HEK293T (cell line): ENCODE measurements at regions of chr1 and their contacts with region 1.

Region 1: DNA sequence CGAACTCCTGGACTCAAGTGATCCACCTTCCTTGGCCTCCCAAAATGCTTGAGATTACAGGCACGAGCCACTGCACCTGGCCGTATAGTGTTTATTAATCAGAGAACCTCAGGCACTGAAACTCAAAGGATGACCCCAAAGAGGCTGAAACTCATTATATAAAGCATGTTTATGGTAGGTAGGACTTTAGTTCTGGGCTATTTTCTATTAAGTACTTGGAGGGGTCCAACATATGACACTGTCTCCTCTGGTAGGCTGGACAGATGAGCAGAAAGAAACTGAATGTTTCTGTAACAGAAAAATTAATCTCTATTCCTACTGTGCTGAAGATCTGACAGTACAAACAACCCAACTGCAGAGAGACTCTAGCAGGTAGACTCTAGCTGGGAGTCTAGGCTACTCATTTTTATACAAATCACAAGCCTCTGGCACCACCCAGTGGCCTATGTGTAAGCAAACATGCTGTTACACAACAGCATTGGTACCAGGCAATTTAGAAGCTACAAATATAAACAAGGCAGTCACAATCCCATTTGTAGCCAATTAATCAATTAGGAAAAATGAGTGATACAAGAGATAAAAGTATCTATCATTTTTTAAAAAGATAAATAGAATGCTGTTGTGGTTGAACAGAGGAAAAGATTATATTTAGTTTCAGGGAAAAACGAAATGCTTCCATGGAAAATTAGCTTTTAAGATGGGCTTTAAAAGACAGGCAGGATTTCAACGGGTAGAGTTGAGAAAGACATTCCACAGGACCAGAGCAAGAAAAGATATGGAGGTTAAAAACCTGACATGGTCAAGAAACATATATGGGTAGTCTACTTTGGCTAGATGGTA is 10.4 kb downstream of the DCAF8 start:
- DNase-seq: peak; percentile 78

Region 2: GRCh38 chr1:160098852-160099561 is 152.9 kb before region 1 on chr1:
- CTCF ChIA-PET with region 1: interaction called, 25 read pairs
- POLR2A ChIA-PET with region 1: interaction called, 3 read pairs
- DNase-seq: peak; percentile 100

Region 3: DNA sequence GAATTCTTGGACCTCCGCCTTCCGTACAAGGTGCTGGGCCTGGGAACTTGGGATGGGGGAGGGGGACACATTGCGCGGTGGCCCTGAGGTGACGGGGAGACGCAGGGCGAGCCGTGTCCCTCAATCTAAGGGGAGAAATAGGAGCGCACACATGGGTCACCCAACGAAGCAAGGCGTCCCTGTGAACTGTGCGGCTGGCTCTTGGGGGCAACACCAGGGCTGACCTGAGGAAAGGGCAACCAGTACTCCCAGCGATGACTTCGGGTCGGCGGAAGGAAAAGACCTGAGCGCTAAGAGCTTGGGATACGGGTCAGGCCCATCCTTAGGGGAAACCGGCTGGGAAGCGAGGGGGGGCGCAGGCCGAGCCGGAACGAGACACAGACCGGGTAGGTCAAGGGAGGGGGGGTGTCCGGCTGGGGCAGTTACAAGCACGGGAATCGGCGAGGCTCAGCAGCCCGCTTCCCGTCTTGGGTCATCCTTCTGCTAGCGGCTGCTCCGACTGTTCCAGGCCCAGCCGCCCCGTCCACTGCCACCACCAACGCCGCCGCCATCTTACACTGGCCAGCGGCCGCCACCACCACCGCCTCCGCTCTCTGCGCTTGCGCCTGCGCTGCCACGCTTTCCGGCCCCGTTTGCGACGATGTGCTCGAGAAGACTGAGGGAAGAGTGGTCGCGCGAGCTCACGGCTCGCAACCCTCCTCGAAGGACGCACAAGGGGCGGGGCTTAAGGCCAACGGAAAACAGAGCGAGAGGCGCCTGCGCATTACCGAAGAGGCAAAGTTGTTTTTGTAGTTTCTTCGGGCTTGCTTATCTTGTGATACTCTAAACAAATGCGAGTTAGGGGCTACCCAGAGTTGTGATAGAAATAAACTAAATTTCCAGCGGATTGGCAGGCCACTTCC is 10.2 kb after region 1 on chr1 and contains the start of gene DCAF8:
- CTCF ChIA-PET with region 1: interaction called, 13 read pairs
- POLR2A ChIA-PET with region 1: interaction called, 9 read pairs
- DNase-seq: peak; percentile 98

Region 4: GRCh38 chr1:160277330-160277729 is 25.4 kb after region 1 on chr1:
- CTCF ChIA-PET with region 1: no interaction called
- POLR2A ChIA-PET with region 1: no interaction called
- DNase-seq: no peak

Region 5: DNA sequence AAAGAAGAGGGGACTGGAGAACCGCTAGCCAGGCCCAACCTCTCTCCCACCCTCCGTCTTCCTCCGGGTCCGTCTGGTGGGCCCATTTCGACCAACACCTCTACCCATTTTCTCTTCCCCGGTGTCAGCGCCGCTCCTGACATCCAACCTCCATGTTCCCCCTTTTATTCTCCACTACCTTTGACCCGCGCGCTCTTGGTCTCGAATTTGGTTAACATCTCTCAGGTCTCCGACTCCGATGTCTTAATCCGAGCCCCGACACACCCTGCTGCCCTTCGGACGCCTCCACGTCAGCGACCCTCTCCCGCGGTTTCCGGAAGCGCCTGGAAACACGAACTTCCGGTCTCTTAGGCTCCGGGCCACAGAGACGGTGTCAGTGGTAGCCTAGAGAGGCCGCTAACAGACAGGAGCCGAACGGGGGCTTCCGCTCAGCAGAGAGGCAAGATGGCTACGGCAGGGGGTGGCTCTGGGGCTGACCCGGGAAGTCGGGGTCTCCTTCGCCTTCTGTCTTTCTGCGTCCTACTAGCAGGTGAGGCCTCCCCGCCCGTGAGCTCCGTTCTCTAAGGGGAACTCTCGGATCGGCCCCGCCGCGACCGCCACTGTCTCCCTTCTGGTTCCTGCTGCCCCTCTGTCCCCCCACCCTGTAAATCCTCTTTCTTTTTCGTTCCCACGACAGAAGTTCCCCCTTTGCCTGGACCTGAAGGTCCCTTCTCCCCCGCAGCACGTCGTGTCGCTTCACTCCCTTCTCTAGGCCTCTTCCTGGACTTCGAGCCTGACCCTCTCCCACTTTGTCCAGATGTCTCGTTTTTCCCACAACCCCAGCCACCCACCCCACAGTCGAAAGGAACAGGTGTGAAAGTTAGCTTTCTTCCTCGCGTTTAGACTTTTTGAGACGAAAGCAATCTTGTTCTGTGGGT is 91.3 kb after region 1 on chr1 and contains the starts of genes COPA and NCSTN:
- CTCF ChIA-PET with region 1: no interaction called
- POLR2A ChIA-PET with region 1: no interaction called
- DNase-seq: peak; percentile 97